ENCODE measurements at regions of chr20 and their contacts with region 1.

Region 1: GRCh38 chr20:38113401-38114325 is 51.4 kb downstream of the TGM2 start:
- DNase-seq: peak; percentile 40
- ATAC-seq: no peak
- H3K4me3 ChIP-seq: no peak overlapping the region
- H3K27ac ChIP-seq: no peak overlapping the region
- H3K4me1 ChIP-seq: peaks cover 56% of the 10 kb centered on the region
- H3K27me3 ChIP-seq: no peaks in the 10 kb centered on the region
- CTCF ChIP-seq: peak; percentile 60

Region 2: DNA sequence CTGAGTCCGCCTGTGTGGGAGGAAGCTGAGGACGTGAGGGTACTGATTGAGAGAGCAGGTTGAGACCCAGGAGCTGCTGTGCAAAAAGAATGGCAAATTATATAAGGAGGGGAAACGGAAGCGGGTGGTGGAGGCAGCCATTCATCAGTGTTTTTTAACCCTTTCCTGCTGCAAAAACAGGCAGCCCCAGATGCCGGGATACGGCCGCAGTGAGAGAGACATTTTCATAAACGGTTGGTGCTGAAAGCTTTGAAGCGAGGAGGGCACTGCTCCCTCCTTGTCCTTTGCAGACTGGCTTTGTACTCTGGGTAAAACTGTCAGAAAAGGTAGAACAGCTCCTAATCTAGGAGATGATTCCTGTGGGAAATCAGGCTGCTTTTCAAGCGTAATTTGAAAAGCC is 136.8 kb before region 1 on chr20:
- CTCF ChIA-PET with region 1: no interaction called
- POLR2A ChIA-PET with region 1: no interaction called
- intact Hi-C with region 1: no loop called
- DNase-seq: no peak
- ATAC-seq: no peak
- H3K4me3 ChIP-seq: no peak overlapping the region
- H3K27ac ChIP-seq: no peak overlapping the region
- H3K4me1 ChIP-seq: no peaks in the 10 kb centered on the region
- H3K27me3 ChIP-seq: no peaks in the 10 kb centered on the region
- CTCF ChIP-seq: no peak

Region 3: GRCh38 chr20:38134387-38135270 is 21.0 kb after region 1 on chr20:
- CTCF ChIA-PET with region 1: interaction called, 4 read pairs
- POLR2A ChIA-PET with region 1: no interaction called
- intact Hi-C with region 1: loop called (anchors 1 kb)
- DNase-seq: peak; percentile 73
- ATAC-seq: peak; percentile 58
- H3K4me3 ChIP-seq: no peak overlapping the region
- H3K27ac ChIP-seq: peak overlapping the region; percentile 73
- H3K4me1 ChIP-seq: peaks cover 34% of the 10 kb centered on the region
- H3K27me3 ChIP-seq: no peaks in the 10 kb centered on the region
- CTCF ChIP-seq: no peak

Region 4: GRCh38 chr20:38152621-38153231 is 39.1 kb after region 1 on chr20:
- CTCF ChIA-PET with region 1: no interaction called
- POLR2A ChIA-PET with region 1: no interaction called
- intact Hi-C with region 1: loop called (anchors 5 kb)
- DNase-seq: peak; percentile 97
- ATAC-seq: peak; percentile 90
- H3K4me3 ChIP-seq: 0 out of 2 replicates have a peak overlapping the region, but pooled peaks have one; percentile 9
- H3K27ac ChIP-seq: peak overlapping the region; percentile 95
- H3K4me1 ChIP-seq: peaks cover 48% of the 10 kb centered on the region
- H3K27me3 ChIP-seq: no peaks in the 10 kb centered on the region
- CTCF ChIP-seq: no peak

Region 5: GRCh38 chr20:38165089-38165989 is 51.7 kb after region 1 on chr20 and contains the start of gene TGM2:
- CTCF ChIA-PET with region 1: no interaction called
- POLR2A ChIA-PET with region 1: no interaction called
- intact Hi-C with region 1: loop called (anchors 5 kb)
- DNase-seq: peak; percentile 91
- ATAC-seq: peak; percentile 81
- H3K4me3 ChIP-seq: peak within 1 kb of the TSS; percentile 79
- H3K27ac ChIP-seq: peak within 1 kb of the TSS; percentile 72
- H3K4me1 ChIP-seq: peaks cover 73% of the 10 kb centered on the region
- H3K27me3 ChIP-seq: no peaks in the 10 kb centered on the region
- CTCF ChIP-seq: peak; percentile 87
- total RNA-seq, gene TGM2: 583 and 773 TPM in 2 replicates

Region 6: DNA sequence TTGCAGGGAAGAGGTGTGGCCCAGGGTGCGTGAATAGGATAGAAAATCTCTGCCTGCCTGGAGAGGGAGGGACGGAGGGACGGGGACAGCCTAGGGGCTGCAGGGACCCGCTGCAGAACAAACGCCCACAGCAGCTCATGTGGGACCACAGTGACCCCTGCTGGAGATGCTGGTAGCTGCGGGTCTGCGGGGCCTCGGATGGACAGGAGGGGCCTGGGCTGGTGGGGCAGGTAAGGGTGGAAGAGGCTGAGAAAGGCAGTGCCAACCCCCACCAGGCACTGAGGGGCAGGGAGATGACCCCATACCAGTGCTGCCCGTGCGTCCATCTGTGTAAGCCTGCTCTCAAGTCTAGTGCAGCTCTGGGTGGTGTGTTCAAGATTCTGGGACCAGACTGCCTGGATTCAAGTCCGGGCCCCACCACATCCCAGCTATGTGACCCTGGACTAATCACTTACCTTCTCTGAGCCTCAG is 107.5 kb after region 1 on chr20:
- CTCF ChIA-PET with region 1: interaction called, 3 read pairs
- POLR2A ChIA-PET with region 1: no interaction called
- intact Hi-C with region 1: loop called (anchors 5 kb)
- DNase-seq: peak; percentile 92
- ATAC-seq: peak; percentile 72
- H3K4me3 ChIP-seq: peak overlapping the region; percentile 14; the same call in 1 of the 2 replicates
- H3K27ac ChIP-seq: peak overlapping the region; percentile 18; the same call in 1 of the 2 replicates
- H3K4me1 ChIP-seq: peaks cover 36% of the 10 kb centered on the region
- H3K27me3 ChIP-seq: no peaks in the 10 kb centered on the region
- CTCF ChIP-seq: peak; percentile 97

Region 7: DNA sequence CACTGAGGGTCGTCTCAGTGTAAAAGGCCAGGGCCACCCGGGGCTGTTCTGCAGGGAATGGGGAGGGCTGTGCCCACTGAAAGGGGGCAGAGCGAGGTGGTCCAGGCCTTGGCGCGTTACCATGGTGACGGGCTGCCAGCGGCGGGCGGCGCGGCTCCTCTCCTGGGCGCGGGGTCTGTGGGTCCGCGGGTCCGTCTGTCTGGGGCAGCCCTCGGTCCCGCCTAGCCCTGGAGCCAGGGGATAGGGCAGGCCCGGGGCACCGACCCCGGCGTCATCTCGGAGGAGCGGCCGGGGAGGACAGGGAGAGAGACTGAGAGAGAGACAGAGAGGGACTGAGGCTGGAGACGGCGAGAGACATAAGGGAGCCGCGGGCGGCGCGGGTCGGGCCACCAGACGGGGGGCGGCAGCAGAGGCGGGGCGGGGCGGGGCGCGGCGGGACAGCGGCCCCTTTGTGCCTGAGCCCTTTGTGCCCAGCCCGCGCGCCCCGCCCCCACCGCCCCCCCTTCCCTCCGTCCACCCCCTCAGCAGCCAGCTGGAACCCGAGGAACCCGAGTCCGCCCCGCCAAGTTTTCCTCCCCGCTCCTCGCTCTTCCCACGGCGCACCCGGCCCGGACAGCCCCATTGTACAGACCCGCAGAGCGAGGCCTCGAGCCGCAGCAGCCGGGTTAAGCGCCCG is 146.9 kb after region 1 on chr20 and contains the start of gene KIAA1755:
- CTCF ChIA-PET with region 1: no interaction called
- POLR2A ChIA-PET with region 1: no interaction called
- intact Hi-C with region 1: no loop called
- DNase-seq: no peak
- ATAC-seq: no peak
- H3K4me3 ChIP-seq: no peak within 1 kb of the TSS
- H3K27ac ChIP-seq: no peak within 1 kb of the TSS
- H3K4me1 ChIP-seq: no peaks in the 10 kb centered on the region
- H3K27me3 ChIP-seq: no peaks in the 10 kb centered on the region
- CTCF ChIP-seq: no peak
- total RNA-seq, gene KIAA1755: 0.44 and 0.86 TPM in 2 replicates